ENCODE measurements at regions of chr16 and their contacts with region 1.

Region 1: DNA sequence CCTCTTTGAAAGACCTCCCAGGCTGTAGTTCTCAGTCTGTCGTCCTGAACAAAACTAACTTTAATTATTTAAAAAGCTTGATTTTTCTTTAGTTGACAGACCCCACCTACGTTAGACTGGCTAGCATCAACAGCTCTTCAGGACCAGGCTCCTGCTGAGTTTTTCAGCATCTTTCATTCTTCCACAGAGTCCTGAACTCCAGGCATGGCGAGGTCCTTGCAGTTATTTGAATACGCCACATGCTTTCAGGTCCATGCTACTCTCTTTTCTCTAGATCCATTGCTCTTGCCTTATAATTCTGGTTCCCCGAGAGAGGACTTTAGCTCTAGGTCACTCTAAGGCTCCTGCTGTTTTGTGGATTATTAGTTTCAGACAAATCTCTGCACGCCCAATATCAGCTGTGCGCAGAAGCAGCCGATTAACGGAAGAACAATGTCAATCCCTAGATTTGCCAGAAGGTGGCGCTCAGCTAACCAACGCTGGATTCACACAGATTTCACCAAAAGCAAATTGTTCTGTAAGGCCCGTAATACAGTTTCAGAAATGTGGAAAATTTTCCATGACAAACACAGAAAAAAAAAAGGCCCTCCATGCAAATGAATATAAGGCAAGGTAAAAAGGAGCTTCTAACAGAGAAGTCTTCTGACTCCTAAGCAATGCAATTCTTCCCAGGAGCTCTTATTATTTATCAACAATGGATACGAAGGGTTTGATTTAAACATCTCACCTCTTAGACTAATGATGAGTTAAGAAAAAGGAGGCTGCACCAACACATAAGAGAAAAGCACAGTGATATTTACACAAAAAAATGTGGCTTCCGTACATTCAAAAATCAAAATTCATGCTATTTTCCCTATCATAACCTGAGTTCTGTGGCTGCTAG is 33.5 kb upstream of the BCO1 start:
- DNase-seq: peak in 1 of 2 donors; percentile 19
- ATAC-seq: peak in 6 of 8 donors; percentile 33 to 65 (median 44)
- H3K4me3 ChIP-seq: no peak overlapping the region
- H3K27ac ChIP-seq: no peak overlapping the region
- H3K4me1 ChIP-seq: no peaks in the 10 kb centered on the region
- H3K27me3 ChIP-seq: peaks cover 0 to 10% (median 0%) of the 10 kb centered on the region in 7 donors
- CTCF ChIP-seq: peak; percentile 51 to 79 (median 68)

Region 2: GRCh38 chr16:81238296-81239011 is 33.4 kb after region 1 on chr16 and contains the start of gene BCO1:
- intact Hi-C with region 1: no loop called
- DNase-seq: no peak
- ATAC-seq: peak in 5 of 8 donors; percentile 5 to 31 (median 13)
- H3K4me3 ChIP-seq: peak within 1 kb of the TSS in 9 of 10 donors; percentile 2 to 44 (median 34)
- H3K27ac ChIP-seq: peak within 1 kb of the TSS in 9 of 10 donors; percentile 27 to 76 (median 55)
- H3K4me1 ChIP-seq: peaks cover 0 to 17% (median 9%) of the 10 kb centered on the region in 9 donors
- H3K27me3 ChIP-seq: no peaks in the 10 kb centered on the region
- CTCF ChIP-seq: no peak
- total RNA-seq, gene BCO1: 0.20 to 0.42 TPM in 2 of 10 donors, not detected in the others

Region 3: GRCh38 chr16:81314603-81315270 is 109.7 kb after region 1 on chr16 and contains the start of gene GAN:
- intact Hi-C with region 1: loop called in 4 of 10 experiments (anchors 5 to 10 kb)
- DNase-seq: peak; percentile 94 to 95
- ATAC-seq: peak; percentile 97 to 99 (median 98)
- H3K4me3 ChIP-seq: peak within 1 kb of the TSS; percentile 43 to 97 (median 75)
- H3K27ac ChIP-seq: peak within 1 kb of the TSS; percentile 79 to 94 (median 92)
- H3K4me1 ChIP-seq: peaks cover 3 to 50% (median 27%) of the 10 kb centered on the region in 9 donors
- H3K27me3 ChIP-seq: no peaks in the 10 kb centered on the region
- CTCF ChIP-seq: no peak
- total RNA-seq, gene GAN: 9.7 to 17.7 (median 12.8) TPM

Region 4: GRCh38 chr16:81324808-81325207 is 119.8 kb after region 1 on chr16:
- intact Hi-C with region 1: loop called in 2 of 10 experiments (anchors 10 kb)
- DNase-seq: no peak
- ATAC-seq: no peak
- H3K4me3 ChIP-seq: no peak overlapping the region
- H3K27ac ChIP-seq: no peak overlapping the region
- H3K4me1 ChIP-seq: peaks cover 0 to 21% (median 4%) of the 10 kb centered on the region in 9 donors
- H3K27me3 ChIP-seq: no peaks in the 10 kb centered on the region
- CTCF ChIP-seq: no peak

Region 5: GRCh38 chr16:81335669-81336068 is 130.6 kb after region 1 on chr16:
- intact Hi-C with region 1: loop called in 1 of 10 experiments (anchors 10 kb)
- DNase-seq: no peak
- ATAC-seq: no peak
- H3K4me3 ChIP-seq: no peak overlapping the region
- H3K27ac ChIP-seq: no peak overlapping the region
- H3K4me1 ChIP-seq: peaks cover 0 to 5% (median 0%) of the 10 kb centered on the region in 9 donors
- H3K27me3 ChIP-seq: no peaks in the 10 kb centered on the region
- CTCF ChIP-seq: no peak

Region 6: DNA sequence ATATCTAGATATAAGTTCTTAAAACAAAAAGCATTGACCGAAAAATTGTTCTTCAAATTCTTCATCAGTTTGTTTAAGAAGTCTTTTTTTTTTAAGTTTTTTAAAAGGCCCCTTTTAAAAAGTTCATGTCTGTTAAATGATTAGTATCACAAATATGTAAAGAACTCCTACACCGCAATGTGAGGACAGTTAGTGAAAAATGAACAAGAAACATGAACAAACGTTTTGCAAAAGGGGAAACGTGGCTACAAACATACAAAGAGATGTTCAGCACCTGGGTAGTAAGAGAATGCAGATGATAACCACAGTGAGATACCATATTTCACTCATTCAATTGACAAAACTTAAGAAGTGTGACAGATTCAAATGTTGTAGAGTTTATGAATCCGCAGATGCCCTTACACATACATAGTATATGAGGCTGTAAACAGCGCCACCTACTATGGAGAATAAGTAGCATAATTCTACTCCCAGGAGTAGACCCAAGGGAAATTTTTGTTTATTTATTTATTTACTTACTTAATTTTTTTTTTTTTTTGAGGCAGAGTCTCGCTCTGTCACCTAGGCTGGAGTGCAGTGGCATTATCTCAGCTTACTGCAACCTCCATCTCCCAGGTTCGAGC is 145.1 kb after region 1 on chr16:
- intact Hi-C with region 1: loop called in 1 of 10 experiments (anchors 10 kb)
- DNase-seq: no peak
- ATAC-seq: no peak
- H3K4me3 ChIP-seq: no peak overlapping the region
- H3K27ac ChIP-seq: no peak overlapping the region
- H3K4me1 ChIP-seq: no peaks in the 10 kb centered on the region
- H3K27me3 ChIP-seq: no peaks in the 10 kb centered on the region
- CTCF ChIP-seq: peak in 4 of 9 donors; percentile 6 to 24 (median 10)

Region 7: DNA sequence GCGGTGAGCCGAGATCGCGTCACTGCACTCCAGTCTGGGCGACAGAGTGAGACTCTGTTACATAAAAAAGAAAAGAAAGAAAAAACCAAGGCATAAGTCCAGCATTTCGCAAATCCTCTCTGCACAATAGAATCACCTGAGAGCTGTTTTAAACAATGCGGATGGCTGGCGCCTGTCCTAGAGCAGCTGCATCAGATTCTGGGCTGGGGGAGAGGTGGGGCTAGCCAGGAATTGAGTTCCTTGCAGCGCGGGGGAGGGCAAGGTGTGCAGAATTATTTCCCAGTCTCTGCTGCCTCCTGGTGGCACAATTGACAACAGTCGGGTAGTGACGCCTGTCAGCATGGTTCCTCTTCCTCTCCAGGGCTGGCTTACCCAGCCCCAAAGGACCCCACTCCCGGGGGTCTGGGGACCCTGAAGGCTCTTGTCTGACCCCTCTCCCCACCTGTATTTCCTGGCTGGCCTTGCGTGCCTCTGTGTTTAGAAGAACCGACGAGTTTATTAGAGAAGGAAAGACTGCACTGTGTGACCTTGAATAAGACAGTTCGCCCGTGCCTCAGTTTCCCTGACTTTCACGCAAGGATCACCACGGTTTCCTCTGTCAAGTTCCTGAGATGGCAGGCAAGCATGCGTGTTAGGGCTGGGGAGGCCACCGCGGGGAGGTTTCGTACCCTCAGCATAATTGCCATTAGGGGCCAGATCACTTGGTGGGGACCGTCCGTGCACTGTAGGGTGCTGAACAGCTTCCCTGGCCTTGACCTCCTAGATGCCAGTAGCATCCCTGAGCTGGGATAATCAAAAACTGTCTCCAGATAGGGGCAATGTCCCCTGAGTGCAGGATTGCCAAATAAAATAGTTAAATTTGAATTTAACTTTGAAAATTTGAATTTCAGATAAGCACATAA is 533.1 kb after region 1 on chr16:
- intact Hi-C with region 1: loop called in 7 of 10 experiments (anchors 5 to 10 kb)
- DNase-seq: peak; percentile 68 to 89
- ATAC-seq: peak; percentile 87 to 97 (median 94)
- H3K4me3 ChIP-seq: peak overlapping the region in 7 of 10 donors; percentile 12 to 43 (median 32)
- H3K27ac ChIP-seq: peak overlapping the region in 5 of 10 donors; percentile 25 to 79 (median 61)
- H3K4me1 ChIP-seq: peaks cover 0 to 24% (median 9%) of the 10 kb centered on the region in 9 donors
- H3K27me3 ChIP-seq: peaks cover 0 to 9% (median 0%) of the 10 kb centered on the region in 7 donors
- CTCF ChIP-seq: peak; percentile 61 to 91 (median 85)

Measured in heart right ventricle (tissue), 16 donors.